ENCODE measurements at regions of chr6 and their contacts with region 1.

Region 1: GRCh38 chr6:5471044-5471443 is 209.7 kb downstream of the FARS2 start:
- DNase-seq: peak in 1 of 2 experiments; percentile 43
- H3K4me3 ChIP-seq: no peak overlapping the region
- H3K27ac ChIP-seq: no peak overlapping the region
- H3K4me1 ChIP-seq: no peaks in the 10 kb centered on the region
- H3K27me3 ChIP-seq: no peaks in the 10 kb centered on the region
- CTCF ChIP-seq: peak; percentile 75

Region 2: GRCh38 chr6:5443491-5443890 is 27.6 kb before region 1 on chr6:
- CTCF ChIA-PET with region 1: interaction called, 12 read pairs
- POLR2A ChIA-PET with region 1: no interaction called
- intact Hi-C with region 1: no loop called
- DNase-seq: no peak
- H3K4me3 ChIP-seq: no peak overlapping the region
- H3K27ac ChIP-seq: no peak overlapping the region
- H3K4me1 ChIP-seq: no peaks in the 10 kb centered on the region
- H3K27me3 ChIP-seq: no peaks in the 10 kb centered on the region
- CTCF ChIP-seq: no peak

Region 3: DNA sequence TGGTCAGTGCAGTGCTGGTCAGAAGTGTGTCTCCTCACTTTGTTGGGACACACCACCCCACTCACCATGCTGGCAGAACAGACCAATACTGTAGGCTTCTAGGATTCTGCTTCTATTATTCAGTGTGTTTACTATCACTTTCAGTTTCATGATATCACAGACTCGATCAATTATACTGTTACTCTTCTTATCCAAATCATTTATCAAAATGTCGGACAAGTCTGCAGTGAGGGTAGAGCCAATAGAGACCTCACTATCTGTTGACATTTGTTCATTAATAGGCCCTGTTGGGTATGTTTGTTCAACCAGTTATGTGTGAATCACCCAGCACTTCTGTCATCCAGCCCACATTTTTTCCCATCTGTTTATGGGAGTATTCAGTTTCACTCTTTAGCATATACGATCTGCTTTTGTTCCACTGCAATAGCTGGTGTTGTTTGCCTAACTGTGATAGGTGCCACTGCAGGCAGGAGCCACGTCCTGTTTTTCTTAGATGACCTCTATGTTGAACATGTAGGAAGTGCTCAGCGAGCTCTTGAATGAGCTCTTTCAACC is 395.6 kb after region 1 on chr6:
- CTCF ChIA-PET with region 1: no interaction called
- POLR2A ChIA-PET with region 1: no interaction called
- intact Hi-C with region 1: loop called (anchors 10 kb)
- DNase-seq: peak; percentile 19 to 63
- H3K4me3 ChIP-seq: no peak overlapping the region; the same call in 1 of the 2 replicates
- H3K27ac ChIP-seq: no peak overlapping the region
- H3K4me1 ChIP-seq: 0 out of 2 replicates have a peak, but pooled peaks cover 4% of the 10 kb centered on the region
- H3K27me3 ChIP-seq: no peaks in the 10 kb centered on the region
- CTCF ChIP-seq: no peak

Region 4: GRCh38 chr6:5995949-5996713 is 525.1 kb after region 1 on chr6:
- CTCF ChIA-PET with region 1: no interaction called
- POLR2A ChIA-PET with region 1: no interaction called
- intact Hi-C with region 1: loop called (anchors 10 kb)
- DNase-seq: no peak
- H3K4me3 ChIP-seq: no peak overlapping the region
- H3K27ac ChIP-seq: no peak overlapping the region
- H3K4me1 ChIP-seq: no peaks in the 10 kb centered on the region
- H3K27me3 ChIP-seq: peaks cover 17% of the 10 kb centered on the region; the same call in 1 of the 2 replicates
- CTCF ChIP-seq: no peak

Measured in PC-9 (cell line).